Aorta (tissue), 5 donors: ENCODE measurements at regions of chr2 and their contacts with region 1.

Region 1: GRCh38 chr2:223797811-223798721 is 39.3 kb downstream of the AP1S3 start:
- DNase-seq: no peak
- ATAC-seq: peak; percentile 64
- H3K4me3 ChIP-seq: no peak overlapping the region
- H3K27ac ChIP-seq: no peak overlapping the region
- H3K4me1 ChIP-seq: no peaks in the 10 kb centered on the region
- H3K27me3 ChIP-seq: no peaks in the 10 kb centered on the region

Region 2: GRCh38 chr2:222969491-222969890 is 828.6 kb before region 1 on chr2:
- intact Hi-C with region 1: loop called (anchors 2 to 5 kb)
- DNase-seq: no peak
- ATAC-seq: no peak
- H3K4me3 ChIP-seq: no peak overlapping the region
- H3K27ac ChIP-seq: no peak overlapping the region
- H3K4me1 ChIP-seq: no peaks in the 10 kb centered on the region
- H3K27me3 ChIP-seq: no peaks in the 10 kb centered on the region

Region 3: DNA sequence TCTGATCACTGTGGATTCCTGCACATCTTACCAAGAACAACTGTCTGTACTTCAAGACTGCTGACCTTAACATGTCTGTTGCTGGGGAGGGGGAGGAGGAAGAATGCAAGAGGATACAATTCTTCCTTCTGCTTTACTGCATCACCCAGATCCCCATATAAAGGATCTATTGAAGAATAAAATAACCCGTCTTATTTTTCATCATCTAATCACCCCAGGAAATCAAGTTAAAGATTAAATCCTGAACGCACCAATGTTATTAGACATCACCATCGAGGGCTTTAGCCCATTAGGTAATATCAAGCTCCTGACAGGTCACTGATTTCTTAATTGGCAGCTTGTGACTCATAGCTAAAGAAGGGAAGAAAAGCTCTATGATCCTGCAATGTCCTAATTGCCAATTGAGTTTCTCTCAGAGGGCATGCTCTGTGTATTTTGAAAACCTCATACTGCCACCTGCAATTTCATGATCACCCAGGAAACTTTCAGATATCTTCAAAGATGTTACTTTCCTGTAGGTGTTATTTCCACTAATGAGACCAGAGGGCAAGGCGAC is 821.5 kb before region 1 on chr2:
- intact Hi-C with region 1: loop called (anchors 2 to 5 kb)
- DNase-seq: no peak
- ATAC-seq: no peak
- H3K4me3 ChIP-seq: no peak overlapping the region
- H3K27ac ChIP-seq: no peak overlapping the region
- H3K4me1 ChIP-seq: peaks cover 0 to 2% of the 10 kb centered on the region in 2 donors
- H3K27me3 ChIP-seq: no peaks in the 10 kb centered on the region

Region 4: GRCh38 chr2:223674998-223675609 is 123.0 kb before region 1 on chr2:
- intact Hi-C with region 1: loop called in 1 of 2 experiments (anchors 5 kb)
- DNase-seq: no peak
- ATAC-seq: no peak
- H3K4me3 ChIP-seq: no peak overlapping the region
- H3K27ac ChIP-seq: no peak overlapping the region
- H3K4me1 ChIP-seq: no peaks in the 10 kb centered on the region
- H3K27me3 ChIP-seq: no peaks in the 10 kb centered on the region

Region 5: GRCh38 chr2:223692191-223692947 is 105.7 kb before region 1 on chr2:
- intact Hi-C with region 1: loop called (anchors 2 to 5 kb)
- DNase-seq: no peak
- ATAC-seq: no peak
- H3K4me3 ChIP-seq: no peak overlapping the region
- H3K27ac ChIP-seq: no peak overlapping the region
- H3K4me1 ChIP-seq: no peaks in the 10 kb centered on the region
- H3K27me3 ChIP-seq: no peaks in the 10 kb centered on the region

Region 6: GRCh38 chr2:223837287-223838061 is 39.4 kb after region 1 on chr2 and contains the start of gene AP1S3:
- intact Hi-C with region 1: no loop called
- DNase-seq: peak; percentile 80 to 87
- ATAC-seq: peak; percentile 85
- H3K4me3 ChIP-seq: peak within 1 kb of the TSS; percentile 67 to 76
- H3K27ac ChIP-seq: peak within 1 kb of the TSS in 1 of 2 donors; percentile 30
- H3K4me1 ChIP-seq: no peaks in the 10 kb centered on the region
- H3K27me3 ChIP-seq: no peaks in the 10 kb centered on the region
- total RNA-seq, gene AP1S3: 0.91 to 2.0 TPM